ENCODE measurements at regions of chr9 and their contacts with region 1.

Region 1: DNA sequence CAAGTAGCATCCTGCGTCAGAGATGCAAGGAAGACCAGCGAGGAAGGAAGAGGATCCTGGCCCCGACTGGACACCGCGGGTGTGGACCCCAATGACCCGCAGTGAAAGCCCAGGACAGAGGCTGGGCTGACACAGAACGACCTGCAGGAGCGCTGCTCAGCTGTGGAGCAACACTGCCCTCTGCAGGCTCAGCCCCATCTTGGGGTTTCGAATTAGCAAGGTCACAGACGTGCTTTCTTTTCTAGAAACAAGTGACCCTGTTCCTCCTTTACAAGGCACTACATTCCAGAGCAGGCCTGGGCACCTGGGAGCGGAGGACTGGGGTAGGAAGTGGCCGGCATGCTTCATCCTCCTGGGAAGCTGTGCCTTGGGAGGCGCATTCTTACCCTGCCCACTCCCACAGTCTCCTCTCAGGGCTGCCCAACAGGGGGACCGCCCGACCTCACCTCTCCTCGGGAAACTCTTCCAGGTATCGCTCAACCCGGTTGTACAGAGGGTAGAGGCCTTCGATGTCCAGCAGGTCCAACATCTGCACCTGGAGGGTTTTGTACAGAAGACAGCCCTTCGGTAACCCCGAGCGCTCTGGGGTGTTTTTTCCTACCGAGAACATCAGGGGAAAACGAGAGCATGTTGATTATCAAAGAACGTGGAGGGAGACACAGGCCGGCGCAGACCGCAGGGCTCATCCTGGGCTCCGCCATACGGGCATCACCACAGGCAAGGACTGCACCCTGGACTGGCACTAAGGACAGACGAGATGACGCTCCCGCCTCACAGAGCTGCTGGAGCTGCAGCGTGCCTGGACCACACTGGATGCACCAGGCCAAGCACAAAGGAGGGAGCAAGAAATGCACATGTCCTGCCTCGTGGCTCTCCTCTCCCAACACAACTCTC is 35.0 kb downstream of the IPPK start:
- DNase-seq: peak; percentile 95
- H3K4me3 ChIP-seq: peak overlapping the region in 2 of 4 donors; percentile 2 to 29
- H3K27ac ChIP-seq: peak overlapping the region; percentile 13 to 53 (median 46)
- H3K4me1 ChIP-seq: peaks cover 8 to 41% (median 36%) of the 10 kb centered on the region in 4 donors
- H3K27me3 ChIP-seq: no peaks in the 10 kb centered on the region
- CTCF ChIP-seq: peak; percentile 90 to 97 (median 94)
- EP300 ChIP-seq: no peak
- POLR2A ChIP-seq: no peak

Region 2: GRCh38 chr9:92133949-92134604 is 500.9 kb before region 1 on chr9:
- intact Hi-C with region 1: loop called (anchors 10 kb)
- DNase-seq: no peak
- H3K4me3 ChIP-seq: peak overlapping the region; percentile 14 to 40 (median 24)
- H3K27ac ChIP-seq: peak overlapping the region in 2 of 4 donors; percentile 16 to 30
- H3K4me1 ChIP-seq: peaks cover 7 to 18% (median 15%) of the 10 kb centered on the region in 4 donors
- H3K27me3 ChIP-seq: peaks cover 0 to 24% (median 0%) of the 10 kb centered on the region in 4 donors
- CTCF ChIP-seq: peak; percentile 88 to 97 (median 89)
- EP300 ChIP-seq: no peak
- POLR2A ChIP-seq: no peak

Region 3: DNA sequence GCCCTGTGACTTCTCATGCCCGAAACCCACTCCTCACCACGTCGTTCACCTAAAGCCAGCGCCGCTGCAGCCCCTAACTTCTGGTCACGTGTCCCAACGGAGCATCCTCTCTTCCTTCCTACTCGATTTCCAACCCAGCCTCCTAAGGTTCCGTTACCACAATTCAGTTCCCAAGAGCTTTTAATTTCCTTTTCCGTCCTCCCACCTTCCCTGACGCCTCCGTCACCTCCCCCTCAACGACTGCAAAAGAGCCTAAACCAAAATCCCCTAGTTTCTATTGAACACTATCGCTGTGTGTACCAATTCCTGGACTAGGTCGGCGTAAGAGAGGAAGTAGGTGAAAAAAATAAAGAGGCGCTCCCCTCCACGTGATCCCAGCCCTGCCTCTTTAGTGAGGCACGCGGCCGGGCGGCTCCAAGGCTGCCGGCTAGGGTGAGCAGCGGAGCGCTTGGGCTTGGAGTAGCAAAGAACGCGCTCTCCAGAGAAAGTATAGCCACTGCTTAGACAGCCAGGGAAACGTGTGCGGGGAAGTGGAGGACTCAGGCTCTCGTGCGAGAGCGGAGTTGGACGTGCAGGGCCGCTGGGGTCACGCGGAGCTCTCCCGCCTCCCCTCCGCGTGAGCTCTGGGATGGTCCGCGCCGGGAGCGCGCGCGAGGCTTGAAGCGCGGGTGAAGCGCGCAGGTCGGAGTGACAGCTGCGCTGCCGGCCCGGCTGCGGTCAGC is 309.5 kb before region 1 on chr9 and contains the starts of genes CENPP and NOL8:
- intact Hi-C with region 1: loop called (anchors 5 kb)
- DNase-seq: peak; percentile 95
- H3K4me3 ChIP-seq: peak within 1 kb of the TSS; percentile 72 to 88 (median 82)
- H3K27ac ChIP-seq: peak within 1 kb of the TSS; percentile 88 to 96 (median 93)
- H3K4me1 ChIP-seq: peaks cover 15 to 24% (median 21%) of the 10 kb centered on the region in 4 donors
- H3K27me3 ChIP-seq: no peaks in the 10 kb centered on the region
- CTCF ChIP-seq: no peak
- EP300 ChIP-seq: no peak
- POLR2A ChIP-seq: no peak
- total RNA-seq, gene CENPP: 1.0 to 5.8 (median 2.0) TPM
- total RNA-seq, gene NOL8: 17.1 to 28.2 (median 22.5) TPM

Region 4: GRCh38 chr9:92342825-92343488 is 292.0 kb before region 1 on chr9:
- intact Hi-C with region 1: loop called (anchors 1 kb)
- DNase-seq: no peak
- H3K4me3 ChIP-seq: no peak overlapping the region
- H3K27ac ChIP-seq: peak overlapping the region in 2 of 4 donors; percentile 8 to 37
- H3K4me1 ChIP-seq: peaks cover 0 to 18% (median 14%) of the 10 kb centered on the region in 4 donors
- H3K27me3 ChIP-seq: no peaks in the 10 kb centered on the region
- CTCF ChIP-seq: peak; percentile 30 to 46 (median 45)
- EP300 ChIP-seq: no peak
- POLR2A ChIP-seq: no peak

Region 5: GRCh38 chr9:92438900-92439526 is 195.9 kb before region 1 on chr9:
- intact Hi-C with region 1: loop called (anchors 5 kb)
- DNase-seq: no peak
- H3K4me3 ChIP-seq: no peak overlapping the region
- H3K27ac ChIP-seq: no peak overlapping the region
- H3K4me1 ChIP-seq: peaks cover 0 to 11% (median 4%) of the 10 kb centered on the region in 4 donors
- H3K27me3 ChIP-seq: no peaks in the 10 kb centered on the region
- CTCF ChIP-seq: peak; percentile 41 to 52 (median 49)
- EP300 ChIP-seq: no peak
- POLR2A ChIP-seq: no peak

Region 6: DNA sequence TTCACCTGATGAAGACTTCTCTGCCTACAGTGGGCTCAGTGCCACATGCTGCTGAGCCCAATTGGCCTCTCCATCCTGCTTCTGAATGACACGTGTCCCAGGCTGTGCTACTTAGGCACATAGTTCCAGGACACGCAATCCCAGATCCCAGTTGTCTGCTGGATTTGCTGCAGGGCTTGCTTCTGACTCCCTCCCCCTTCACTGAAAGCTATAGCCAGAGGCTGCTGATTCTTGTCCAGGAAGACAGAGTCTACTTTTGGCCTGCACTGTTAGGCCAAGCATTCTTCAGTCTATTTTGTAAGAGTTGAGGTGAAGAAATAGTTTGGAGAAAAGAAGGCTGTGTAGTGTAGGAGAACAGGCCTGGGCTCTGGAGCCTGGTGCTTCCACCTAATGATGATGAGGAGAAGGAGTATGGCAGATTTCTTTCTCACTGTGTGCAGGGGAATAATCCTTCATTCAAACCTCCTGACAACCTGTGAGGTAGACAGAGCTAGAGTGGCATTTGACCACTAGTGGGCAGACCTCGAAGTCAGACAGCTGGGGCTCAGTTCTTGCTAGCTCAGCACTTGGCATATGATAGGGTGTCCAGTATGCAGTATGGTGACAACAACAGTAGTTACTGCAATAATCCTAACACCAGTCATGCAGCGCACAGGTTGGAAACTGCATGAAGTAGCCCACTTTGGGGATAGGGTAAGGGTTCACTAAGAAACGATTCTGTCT is 133.1 kb before region 1 on chr9:
- intact Hi-C with region 1: loop called (anchors 5 kb)
- DNase-seq: no peak
- H3K4me3 ChIP-seq: no peak overlapping the region
- H3K27ac ChIP-seq: peak overlapping the region; percentile 72 to 80 (median 78)
- H3K4me1 ChIP-seq: peaks cover 22 to 76% (median 69%) of the 10 kb centered on the region in 4 donors
- H3K27me3 ChIP-seq: no peaks in the 10 kb centered on the region
- CTCF ChIP-seq: peak in 1 of 3 experiments; percentile 35
- EP300 ChIP-seq: no peak
- POLR2A ChIP-seq: no peak

Region 7: DNA sequence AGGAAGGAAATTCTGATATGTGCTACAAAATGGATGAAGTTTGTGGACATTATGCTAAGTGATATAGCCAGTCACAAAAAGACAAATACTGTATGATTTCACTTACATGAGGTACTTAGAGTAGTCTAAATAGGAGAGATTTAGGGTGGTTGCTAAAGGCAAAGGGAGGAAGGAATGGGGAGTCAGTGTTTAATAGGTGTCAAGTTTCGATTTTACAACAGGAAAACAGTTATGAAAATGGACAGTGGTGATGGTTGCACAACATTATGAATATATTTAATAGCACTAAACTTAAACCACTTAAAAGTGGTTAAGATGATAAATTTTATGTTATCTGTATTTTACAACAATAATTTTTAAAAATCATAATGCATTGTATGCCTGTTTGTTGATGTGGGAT is 58.8 kb before region 1 on chr9:
- intact Hi-C with region 1: no loop called
- DNase-seq: no peak
- H3K4me3 ChIP-seq: no peak overlapping the region
- H3K27ac ChIP-seq: no peak overlapping the region
- H3K4me1 ChIP-seq: peaks cover 0 to 8% (median 3%) of the 10 kb centered on the region in 4 donors
- H3K27me3 ChIP-seq: no peaks in the 10 kb centered on the region
- CTCF ChIP-seq: no peak
- EP300 ChIP-seq: no peak
- POLR2A ChIP-seq: no peak

Measured in esophagus muscularis mucosa (tissue), 4 donors.